OCI-LY7 (cell line): ENCODE measurements at regions of chr7 and their contacts with region 1.

Region 1: GRCh38 chr7:1569833-1570633 is at the start of gene PSMG3:
- DNase-seq: peak; percentile 94
- H3K4me3 ChIP-seq: peak within 1 kb of the TSS; percentile 80
- H3K27ac ChIP-seq: peak within 1 kb of the TSS; percentile 72
- H3K4me1 ChIP-seq: peaks cover 27% of the 10 kb centered on the region
- CTCF ChIP-seq: peak; percentile 56
- total RNA-seq, gene PSMG3: 128 and 129 TPM in 2 replicates

Region 2: GRCh38 chr7:1664711-1665548 is 94.9 kb after region 1 on chr7:
- CTCF ChIA-PET with region 1: no interaction called
- POLR2A ChIA-PET with region 1: no interaction called
- intact Hi-C with region 1: loop called (anchors 10 kb)
- DNase-seq: peak; percentile 35
- H3K4me3 ChIP-seq: no peak overlapping the region
- H3K27ac ChIP-seq: no peak overlapping the region
- H3K4me1 ChIP-seq: no peaks in the 10 kb centered on the region
- CTCF ChIP-seq: peak; percentile 71

Region 3: GRCh38 chr7:1856161-1856887 is 286.3 kb after region 1 on chr7:
- CTCF ChIA-PET with region 1: no interaction called
- POLR2A ChIA-PET with region 1: no interaction called
- intact Hi-C with region 1: no loop called
- DNase-seq: no peak
- H3K4me3 ChIP-seq: no peak overlapping the region
- H3K27ac ChIP-seq: no peak overlapping the region
- H3K4me1 ChIP-seq: no peaks in the 10 kb centered on the region
- CTCF ChIP-seq: no peak

Region 4: GRCh38 chr7:2354186-2354938 is 784.3 kb after region 1 on chr7 and contains the start of gene EIF3B:
- CTCF ChIA-PET with region 1: no interaction called
- POLR2A ChIA-PET with region 1: no interaction called
- intact Hi-C with region 1: loop called (anchors 10 kb)
- DNase-seq: peak; percentile 97
- H3K4me3 ChIP-seq: peak within 1 kb of the TSS; percentile 91
- H3K27ac ChIP-seq: peak within 1 kb of the TSS; percentile 79
- H3K4me1 ChIP-seq: peaks cover 20% of the 10 kb centered on the region
- CTCF ChIP-seq: no peak
- total RNA-seq, gene EIF3B: 181 and 241 TPM in 2 replicates